GM10248 (cell line): ENCODE measurements at regions of chr11 and their contacts with region 1.

Region 1: GRCh38 chr11:5737091-5737490 is 843 bp downstream of the OR56B1 start:
- DNase-seq: no peak
- CTCF ChIP-seq: no peak

Region 2: GRCh38 chr11:5726351-5726750 is 10.7 kb before region 1 on chr11:
- CTCF ChIA-PET with region 1: interaction called, 11 read pairs
- POLR2A ChIA-PET with region 1: no interaction called
- DNase-seq: no peak
- CTCF ChIP-seq: no peak

Region 3: GRCh38 chr11:5791165-5791564 is 54.1 kb after region 1 on chr11 and contains the start of gene OR52N1:
- CTCF ChIA-PET with region 1: no interaction called
- POLR2A ChIA-PET with region 1: no interaction called
- DNase-seq: no peak
- CTCF ChIP-seq: no peak